Calu3 (cell line): ENCODE measurements at regions of chr10 and their contacts with region 1.

Region 1: GRCh38 chr10:100625816-100626215 is 90.1 kb downstream of the HIF1AN start:
- DNase-seq: no peak
- H3K4me3 Mint-ChIP-seq: no peak overlapping the region
- H3K27ac Mint-ChIP-seq: no peak overlapping the region
- H3K4me1 Mint-ChIP-seq: no peaks in the 10 kb centered on the region
- H3K27me3 Mint-ChIP-seq: peaks cover 74% of the 10 kb centered on the region
- CTCF ChIP-seq: no peak

Region 2: DNA sequence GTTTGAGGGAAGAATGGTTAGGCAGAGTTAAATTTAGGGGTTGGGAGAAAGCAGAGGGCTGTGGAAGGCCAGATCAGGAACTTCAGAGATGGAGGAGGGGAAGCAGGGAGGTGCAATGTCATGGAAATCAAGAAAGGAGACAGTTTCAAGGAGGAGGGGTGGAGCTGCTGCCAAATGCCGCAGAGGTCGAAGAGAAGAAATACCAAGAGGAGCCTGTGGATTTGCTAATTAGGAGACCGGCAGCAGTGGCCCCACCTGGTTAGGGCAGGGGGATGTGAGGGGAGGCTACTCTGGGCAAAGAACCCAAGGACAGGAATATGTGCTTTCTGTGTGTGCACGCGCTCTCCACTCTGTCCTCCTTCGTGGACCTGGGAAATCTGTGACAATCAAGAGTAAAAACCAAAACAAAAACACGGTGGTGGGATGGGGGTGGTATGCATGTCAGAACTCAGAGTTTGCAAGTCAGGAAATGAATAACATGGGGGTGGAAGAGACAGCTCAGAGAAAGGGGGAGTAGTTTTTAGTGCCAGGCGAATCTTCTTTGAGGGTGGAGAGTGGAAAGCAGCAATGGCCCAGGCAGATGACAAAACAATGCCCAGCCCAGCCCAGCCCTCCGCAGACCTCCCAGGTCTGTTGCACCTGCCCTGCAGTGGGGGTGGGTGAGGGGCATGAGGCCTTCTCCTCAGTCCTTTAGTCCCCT is 16.6 kb after region 1 on chr10:
- CTCF ChIA-PET with region 1: interaction called, 11 read pairs
- intact Hi-C with region 1: no loop called
- DNase-seq: no peak
- H3K4me3 Mint-ChIP-seq: no peak overlapping the region
- H3K27ac Mint-ChIP-seq: no peak overlapping the region
- H3K4me1 Mint-ChIP-seq: no peaks in the 10 kb centered on the region
- H3K27me3 Mint-ChIP-seq: peaks cover 95% of the 10 kb centered on the region
- CTCF ChIP-seq: no peak